HEK293 (cell line): ENCODE measurements at regions of chr9 and their contacts with region 1.

Region 1: GRCh38 chr9:4297151-4297785 is 2.6 kb downstream of the GLIS3 start:
- H3K4me3 ChIP-seq: peak overlapping the region; percentile 73
- H3K27ac ChIP-seq: peak overlapping the region; percentile 92
- H3K4me1 ChIP-seq: peaks cover 11% of the 10 kb centered on the region; the same call in 1 of the 2 replicates
- CTCF ChIP-seq: peak; percentile 66

Region 2: GRCh38 chr9:4315582-4316215 is 18.4 kb after region 1 on chr9:
- CTCF ChIA-PET with region 1: interaction called, 57 read pairs
- POLR2A ChIA-PET with region 1: no interaction called
- H3K4me3 ChIP-seq: no peak overlapping the region
- H3K27ac ChIP-seq: no peak overlapping the region
- H3K4me1 ChIP-seq: no peaks in the 10 kb centered on the region
- CTCF ChIP-seq: peak; percentile 54; the same call in 1 of the 2 replicates

Region 3: GRCh38 chr9:4489919-4490704 is 192.8 kb after region 1 on chr9 and contains the start of gene SLC1A1:
- CTCF ChIA-PET with region 1: no interaction called
- POLR2A ChIA-PET with region 1: no interaction called
- H3K4me3 ChIP-seq: peak within 1 kb of the TSS; percentile 58
- H3K27ac ChIP-seq: peak within 1 kb of the TSS; percentile 53; the same call in 1 of the 2 replicates
- H3K4me1 ChIP-seq: peaks cover 3% of the 10 kb centered on the region; the same call in 1 of the 2 replicates
- CTCF ChIP-seq: no peak